ENCODE measurements at regions of chr10 and their contacts with region 1.

Region 1: DNA sequence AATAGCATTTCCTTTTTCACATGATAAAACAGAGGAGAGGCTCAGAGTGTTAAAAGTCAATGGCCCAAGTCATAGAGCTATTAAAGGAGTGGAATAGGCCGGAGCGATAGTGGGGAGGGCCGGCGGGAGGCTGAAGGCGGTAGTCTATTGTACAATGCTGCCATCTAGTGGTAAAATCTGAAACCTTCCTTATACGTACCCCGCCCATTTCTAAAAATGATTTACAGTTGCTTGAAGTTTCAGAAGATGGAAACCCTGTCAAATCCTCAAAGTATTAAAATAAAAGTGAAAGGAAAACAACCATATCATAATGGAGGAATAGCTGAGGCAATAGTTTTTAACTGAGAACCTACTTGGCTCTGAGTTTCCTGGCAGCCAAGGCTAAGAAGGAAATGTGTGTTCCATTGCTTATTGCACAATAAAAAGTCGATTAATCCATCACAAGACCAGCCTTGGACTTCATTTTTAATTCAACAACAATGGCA is 209.1 kb downstream of the CCSER2 start:
- DNase-seq: no peak
- H3K4me3 ChIP-seq: no peak overlapping the region
- H3K27me3 ChIP-seq: no peaks in the 10 kb centered on the region
- CTCF ChIP-seq: peak; percentile 62

Region 2: GRCh38 chr10:84264611-84265141 is 272.8 kb before region 1 on chr10:
- CTCF ChIA-PET with region 1: interaction called, 221 read pairs
- POLR2A ChIA-PET with region 1: no interaction called
- DNase-seq: no peak
- H3K4me3 ChIP-seq: no peak overlapping the region
- H3K27me3 ChIP-seq: peaks cover 7% of the 10 kb centered on the region; the same call in 1 of the 2 replicates
- CTCF ChIP-seq: peak; percentile 97

Region 3: GRCh38 chr10:84360637-84361365 is 176.7 kb before region 1 on chr10:
- CTCF ChIA-PET with region 1: interaction called, 12 read pairs
- POLR2A ChIA-PET with region 1: no interaction called
- DNase-seq: peak; percentile 2
- H3K4me3 ChIP-seq: peak overlapping the region; percentile 40
- H3K27me3 ChIP-seq: no peaks in the 10 kb centered on the region
- CTCF ChIP-seq: no peak

Region 4: DNA sequence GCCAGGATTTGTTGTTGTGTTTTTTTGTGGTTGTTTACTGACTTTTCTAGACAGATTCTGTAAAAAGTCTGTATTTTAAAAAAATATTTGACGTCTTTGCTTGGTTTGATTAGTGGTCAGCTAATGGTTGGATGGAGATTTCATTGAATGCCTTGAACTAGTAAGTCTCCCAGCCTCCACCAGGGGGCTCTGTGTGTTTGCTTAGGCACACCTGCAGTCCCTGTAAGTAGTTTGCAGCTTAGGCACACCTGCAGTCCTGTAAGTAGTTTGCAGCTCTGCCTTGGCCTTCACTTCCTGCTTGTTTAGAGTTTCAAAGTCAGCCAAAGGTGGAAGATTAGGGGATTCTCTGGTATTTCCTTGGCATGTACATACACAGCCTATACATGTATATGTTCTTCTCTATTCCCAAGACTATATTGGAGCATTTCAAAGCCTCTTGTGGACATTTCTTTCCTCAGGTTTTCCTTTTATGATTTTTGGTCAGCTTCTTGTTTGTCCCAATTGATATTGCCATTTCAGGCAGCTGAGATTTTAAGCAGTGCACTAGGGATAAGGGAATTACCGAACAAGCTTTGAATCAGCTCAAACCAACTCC is 107.5 kb before region 1 on chr10:
- CTCF ChIA-PET with region 1: interaction called, 11 read pairs
- POLR2A ChIA-PET with region 1: no interaction called
- DNase-seq: no peak
- H3K4me3 ChIP-seq: no peak overlapping the region
- H3K27me3 ChIP-seq: no peaks in the 10 kb centered on the region
- CTCF ChIP-seq: peak; percentile 78

Region 5: GRCh38 chr10:84548869-84549268 is 11.4 kb after region 1 on chr10:
- CTCF ChIA-PET with region 1: interaction called, 59 read pairs
- POLR2A ChIA-PET with region 1: no interaction called
- DNase-seq: no peak
- H3K4me3 ChIP-seq: no peak overlapping the region
- H3K27me3 ChIP-seq: peaks cover 2% of the 10 kb centered on the region
- CTCF ChIP-seq: peak; percentile 40

Region 6: DNA sequence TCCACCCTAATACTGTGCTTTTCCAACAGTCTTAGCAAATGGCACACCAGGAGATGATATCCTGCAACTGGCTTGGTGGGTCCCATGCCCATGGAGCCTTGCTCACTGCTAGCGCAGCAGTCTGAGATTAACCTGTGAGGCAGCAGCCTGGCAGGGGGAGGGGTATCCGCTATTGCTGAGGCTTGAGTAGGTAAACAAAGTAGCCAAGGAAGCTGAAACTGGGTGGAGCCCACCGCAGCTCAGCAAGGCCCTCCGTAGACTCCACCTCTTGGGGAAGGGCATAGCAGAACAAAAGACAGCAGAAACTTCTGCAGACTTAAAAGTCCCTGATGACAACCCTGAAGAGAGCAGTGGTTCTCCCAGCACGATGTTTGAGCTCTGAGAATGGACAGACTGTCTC is 189.9 kb after region 1 on chr10:
- CTCF ChIA-PET with region 1: no interaction called
- POLR2A ChIA-PET with region 1: no interaction called
- DNase-seq: no peak
- H3K4me3 ChIP-seq: no peak overlapping the region
- H3K27me3 ChIP-seq: no peaks in the 10 kb centered on the region
- CTCF ChIP-seq: no peak